ENCODE measurements at regions of chr1 and their contacts with region 1.

Region 1: GRCh38 chr1:50704126-50704525 is 255.9 kb downstream of the FAF1 start:
- DNase-seq: peak; percentile 36
- ATAC-seq: no peak
- H3K4me3 ChIP-seq: no peak overlapping the region
- H3K27ac ChIP-seq: no peak overlapping the region
- H3K4me1 ChIP-seq: peaks cover 5% of the 10 kb centered on the region; the same call in 1 of the 2 replicates
- H3K27me3 ChIP-seq: no peaks in the 10 kb centered on the region
- CTCF ChIP-seq: peak; percentile 81; the same call in 1 of the 2 replicates

Region 2: DNA sequence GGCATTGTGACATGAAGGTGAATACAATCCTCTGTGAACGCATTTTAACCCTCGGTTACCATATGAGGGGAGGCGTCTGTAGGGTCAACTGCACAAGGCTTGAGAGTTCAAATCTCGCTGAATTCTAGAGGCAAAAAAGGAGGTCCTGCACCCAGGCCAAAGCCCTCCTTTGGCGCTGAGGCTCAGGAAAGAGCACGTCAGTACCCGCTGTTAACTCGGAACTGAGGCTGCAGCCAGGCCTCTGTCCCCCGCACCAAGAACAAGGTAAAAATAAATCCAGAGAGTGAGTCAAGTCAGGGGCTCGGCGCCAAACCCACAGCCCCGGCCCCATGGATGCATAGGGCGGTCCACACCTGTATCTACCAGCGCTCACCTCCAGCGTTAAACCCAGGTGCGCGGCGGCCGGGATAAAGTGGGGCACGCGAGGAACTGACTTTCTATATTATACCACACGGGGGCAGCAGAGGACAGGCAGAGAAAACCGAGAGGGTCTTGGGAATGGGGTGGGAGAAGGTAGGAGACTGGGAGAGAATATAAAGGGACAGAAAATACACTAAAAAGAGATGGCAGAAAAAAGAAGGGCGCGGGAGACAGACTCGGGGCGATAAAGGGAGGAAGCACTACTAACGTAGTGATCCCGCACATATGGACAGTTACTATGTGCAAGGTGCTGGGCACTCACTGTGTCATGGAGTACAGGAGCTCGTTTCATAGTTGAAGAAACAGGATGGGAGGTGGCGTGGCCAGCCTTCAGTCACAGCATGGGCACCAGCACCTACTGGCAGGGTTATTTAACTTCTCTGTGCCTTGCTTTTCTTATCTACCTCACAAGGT is 335.7 kb before region 1 on chr1:
- CTCF ChIA-PET with region 1: interaction called, 3 read pairs
- POLR2A ChIA-PET with region 1: no interaction called
- in situ Hi-C with region 1: no loop called
- intact Hi-C with region 1: loop called (anchors 1 kb)
- DNase-seq: peak; percentile 13
- ATAC-seq: peak; percentile 92
- H3K4me3 ChIP-seq: peak overlapping the region; percentile 7 to 23; a peak in 2 of 4 replicates
- H3K27ac ChIP-seq: no peak overlapping the region
- H3K4me1 ChIP-seq: peaks cover 3% of the 10 kb centered on the region; the same call in 1 of the 2 replicates
- H3K27me3 ChIP-seq: peaks cover 15% of the 10 kb centered on the region
- CTCF ChIP-seq: peak; percentile 91

Region 3: DNA sequence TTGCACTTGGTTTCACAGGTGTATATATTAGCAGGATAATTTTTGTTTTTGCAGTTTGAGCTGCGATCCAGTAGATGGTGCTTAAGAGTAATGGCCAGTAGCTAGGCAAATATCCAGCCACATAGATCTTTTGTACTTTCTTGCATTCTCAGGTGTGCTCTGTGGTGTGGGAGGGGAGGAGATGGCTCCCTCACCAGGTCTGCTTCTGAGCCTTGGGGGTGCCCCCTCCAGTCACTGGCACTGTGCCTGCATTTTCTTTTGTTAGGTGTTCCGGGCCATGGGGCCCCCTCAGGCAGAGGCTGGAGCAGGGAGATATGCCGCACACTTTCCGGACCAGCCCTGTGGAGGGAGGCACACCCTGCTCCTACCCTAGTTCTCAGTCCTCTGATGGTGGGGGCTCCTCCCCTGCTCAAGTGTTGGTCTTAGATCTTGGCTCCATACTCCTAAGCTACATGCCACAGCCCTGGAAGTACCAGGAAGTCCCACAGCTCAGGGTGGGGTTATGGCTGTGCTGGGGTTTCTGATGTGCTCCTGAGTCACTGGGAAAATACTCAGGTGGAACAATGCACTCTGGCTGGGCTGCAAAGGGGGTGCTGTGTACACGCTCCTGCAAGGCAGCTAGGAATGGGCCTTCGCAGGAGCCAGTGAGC is 83.3 kb before region 1 on chr1:
- CTCF ChIA-PET with region 1: interaction called, 11 read pairs
- POLR2A ChIA-PET with region 1: no interaction called
- in situ Hi-C with region 1: no loop called
- intact Hi-C with region 1: loop called (anchors 2 kb)
- DNase-seq: no peak
- ATAC-seq: peak; percentile 86
- H3K4me3 ChIP-seq: no peak overlapping the region
- H3K27ac ChIP-seq: no peak overlapping the region
- H3K4me1 ChIP-seq: no peaks in the 10 kb centered on the region
- H3K27me3 ChIP-seq: no peaks in the 10 kb centered on the region
- CTCF ChIP-seq: peak; percentile 78

Measured in Panc1 (cell line).